Psoas muscle (tissue), 8 donors: ENCODE measurements at regions of chr10 and their contacts with region 1.

Region 1: DNA sequence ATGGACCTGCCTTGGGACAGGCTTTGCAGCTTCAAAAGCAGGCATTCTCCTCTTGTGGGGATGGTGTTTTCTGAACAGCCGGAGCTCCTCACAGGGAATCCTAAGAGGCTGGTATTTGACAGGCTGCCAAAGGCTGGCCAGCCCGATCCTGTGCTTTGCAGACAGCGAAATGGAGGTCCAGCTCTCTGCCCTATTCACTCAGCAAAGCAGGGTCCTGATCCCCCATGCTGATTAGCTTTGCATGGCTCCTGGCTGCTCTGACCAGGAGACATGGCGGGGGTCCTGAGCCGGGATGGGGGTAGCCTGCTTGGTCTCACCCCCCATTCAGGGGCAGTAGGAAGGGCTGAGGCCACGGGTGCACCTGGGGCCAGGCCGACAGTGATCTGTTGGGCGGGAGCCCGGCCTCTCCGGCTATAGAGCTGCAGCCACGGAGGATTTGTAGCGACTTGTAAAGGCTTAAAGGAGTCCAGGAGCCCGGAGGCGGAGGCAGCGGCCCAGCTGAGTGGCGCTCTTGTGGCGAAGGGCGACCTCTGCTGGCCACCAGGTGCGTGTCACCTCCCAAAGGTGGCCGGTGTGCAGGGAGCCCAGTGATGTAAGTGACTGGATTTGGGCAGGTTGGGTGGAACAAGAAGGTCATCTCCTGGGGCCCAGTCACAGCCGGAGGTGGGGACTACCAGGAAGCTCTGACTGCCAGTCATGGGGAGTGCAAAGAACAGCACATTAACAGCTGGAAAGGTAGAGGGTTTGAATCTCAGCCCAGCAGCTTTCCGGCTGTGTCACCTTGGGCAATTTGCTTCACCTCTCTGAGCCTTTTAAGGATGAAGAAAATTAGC is 126.5 kb downstream of the ZMIZ1 start:
- DNase-seq: peak; percentile 87 to 92
- ATAC-seq: peak; percentile 82 to 92 (median 88)
- H3K4me3 ChIP-seq: peak overlapping the region; percentile 22
- H3K27ac ChIP-seq: peak overlapping the region; percentile 53
- H3K4me1 ChIP-seq: peaks cover 28% of the 10 kb centered on the region
- H3K27me3 ChIP-seq: no peaks in the 10 kb centered on the region
- CTCF ChIP-seq: peak; percentile 98

Region 2: DNA sequence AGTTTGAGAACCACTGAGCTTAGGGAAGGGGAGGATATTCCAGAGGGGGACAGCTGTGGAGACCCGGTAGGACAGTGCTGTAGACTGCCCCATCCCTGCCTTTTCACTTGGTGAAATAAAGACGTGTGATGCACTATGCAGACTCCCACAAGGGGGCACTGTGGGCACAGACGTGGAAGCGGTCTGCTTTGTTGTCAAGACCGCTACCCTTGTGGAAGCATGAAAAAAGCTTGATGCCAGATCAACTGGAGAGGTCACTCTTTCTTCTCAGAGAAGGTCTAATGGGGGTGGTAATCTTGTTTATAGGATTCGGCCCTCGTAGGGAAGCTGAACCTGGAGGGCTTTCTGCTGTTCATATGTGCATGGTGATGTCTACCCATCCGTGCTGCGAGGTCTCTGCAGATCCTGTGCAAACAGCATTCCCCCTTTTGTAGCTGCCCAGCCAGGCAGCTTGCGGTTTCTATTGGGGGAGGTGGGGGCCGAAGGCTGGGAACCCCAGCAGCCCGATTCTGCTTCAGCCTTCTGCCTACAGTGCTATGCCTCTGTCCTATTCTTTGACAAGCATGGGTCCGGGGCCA is 1147.9 kb before region 1 on chr10:
- intact Hi-C with region 1: loop called (anchors 2 to 5 kb)
- DNase-seq: peak; percentile 87 to 92
- ATAC-seq: peak; percentile 75 to 89 (median 84)
- H3K4me3 ChIP-seq: no peak overlapping the region
- H3K27ac ChIP-seq: no peak overlapping the region
- H3K4me1 ChIP-seq: peaks cover 11% of the 10 kb centered on the region
- H3K27me3 ChIP-seq: no peaks in the 10 kb centered on the region
- CTCF ChIP-seq: peak; percentile 86

Region 3: DNA sequence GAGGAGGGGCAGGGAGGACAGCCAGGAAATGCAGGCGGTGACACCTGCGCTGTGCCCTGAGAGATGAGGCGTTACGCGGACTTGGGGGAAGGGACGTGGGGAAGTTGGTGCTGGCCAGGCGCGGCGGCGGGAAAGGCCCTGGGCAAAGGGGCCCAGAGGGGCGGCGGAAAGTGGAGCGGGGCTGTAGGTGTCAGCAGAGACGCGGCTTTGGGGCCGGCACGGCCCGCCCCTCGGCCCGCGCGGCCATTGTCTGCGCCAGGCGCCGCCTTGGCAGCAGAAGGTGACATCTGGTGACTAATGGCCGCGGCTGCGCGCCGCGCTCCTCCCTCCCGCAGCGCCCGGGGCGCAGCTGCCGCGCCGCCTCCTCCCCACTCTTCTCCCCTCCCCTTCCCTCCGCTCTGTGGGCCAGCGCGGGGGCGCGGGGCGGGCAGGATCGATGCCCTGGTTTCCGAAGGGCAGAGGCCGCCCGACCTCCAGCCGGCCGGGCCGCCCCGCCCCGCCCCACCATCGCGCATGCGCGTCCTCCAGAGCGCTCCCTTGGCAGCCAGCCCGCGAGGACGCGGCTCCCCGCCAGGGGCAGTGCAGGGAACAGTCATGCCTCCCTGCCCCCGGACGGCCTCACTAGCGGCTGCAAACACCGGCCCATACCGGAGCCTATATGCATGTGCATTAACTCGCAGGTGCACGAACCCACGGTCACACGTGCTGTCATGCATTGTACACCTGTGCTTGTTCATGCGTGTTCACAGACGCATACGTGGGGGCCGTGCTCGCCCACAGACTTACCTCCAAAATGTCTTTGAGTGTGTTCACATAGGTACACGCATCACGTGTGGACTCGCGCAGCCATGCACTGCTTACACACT is 892.1 kb before region 1 on chr10:
- intact Hi-C with region 1: loop called in 1 of 2 experiments (anchors 10 kb)
- DNase-seq: peak; percentile 96 to 97
- ATAC-seq: peak; percentile 94 to 96 (median 96)
- H3K4me3 ChIP-seq: peak overlapping the region; percentile 79
- H3K27ac ChIP-seq: peak overlapping the region; percentile 89
- H3K4me1 ChIP-seq: peaks cover 14% of the 10 kb centered on the region
- H3K27me3 ChIP-seq: no peaks in the 10 kb centered on the region
- CTCF ChIP-seq: peak; percentile 60

Region 4: DNA sequence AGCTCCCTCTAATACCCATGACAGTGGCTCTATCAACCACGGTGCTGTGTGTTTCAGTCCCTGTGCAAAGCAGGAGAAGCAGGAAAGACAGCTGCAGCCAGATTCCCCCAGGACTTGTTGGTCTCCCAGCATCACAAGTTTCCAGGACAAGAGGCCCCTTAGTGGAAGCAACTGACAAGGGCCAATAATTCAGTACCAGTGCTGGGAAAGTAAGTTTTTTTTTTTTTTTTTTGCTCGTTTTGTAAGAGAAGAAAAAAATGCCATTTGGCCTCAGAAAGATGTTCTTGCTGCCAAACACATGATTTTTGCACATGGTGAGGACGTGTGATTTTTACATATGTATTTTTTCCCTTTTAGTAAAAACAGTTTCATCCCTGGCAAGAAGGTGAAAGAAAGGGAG is 410.8 kb before region 1 on chr10:
- intact Hi-C with region 1: loop called in 1 of 2 experiments (anchors 10 kb)
- DNase-seq: no peak
- ATAC-seq: peak in 1 of 4 donors; percentile 28
- H3K4me3 ChIP-seq: no peak overlapping the region
- H3K27ac ChIP-seq: no peak overlapping the region
- H3K4me1 ChIP-seq: no peaks in the 10 kb centered on the region
- H3K27me3 ChIP-seq: no peaks in the 10 kb centered on the region
- CTCF ChIP-seq: no peak

Region 5: GRCh38 chr10:78931321-78932053 is 263.8 kb before region 1 on chr10:
- intact Hi-C with region 1: loop called in 1 of 2 experiments (anchors 10 kb)
- DNase-seq: peak; percentile 79 to 84
- ATAC-seq: peak in 1 of 4 donors; percentile 57
- H3K4me3 ChIP-seq: no peak overlapping the region
- H3K27ac ChIP-seq: peak overlapping the region; percentile 23
- H3K4me1 ChIP-seq: no peaks in the 10 kb centered on the region
- H3K27me3 ChIP-seq: no peaks in the 10 kb centered on the region
- CTCF ChIP-seq: no peak

Region 6: GRCh38 chr10:79068562-79069324 is 126.6 kb before region 1 on chr10 and contains the start of gene ZMIZ1:
- intact Hi-C with region 1: loop called (anchors 5 kb)
- DNase-seq: peak; percentile 89 to 93
- ATAC-seq: peak; percentile 49 to 61 (median 52)
- H3K4me3 ChIP-seq: peak within 1 kb of the TSS; percentile 94
- H3K27ac ChIP-seq: peak within 1 kb of the TSS; percentile 97
- H3K4me1 ChIP-seq: peaks cover 29% of the 10 kb centered on the region
- H3K27me3 ChIP-seq: no peaks in the 10 kb centered on the region
- CTCF ChIP-seq: peak; percentile 45
- total RNA-seq, gene ZMIZ1: 30.0 to 37.6 (median 35.4) TPM

Region 7: DNA sequence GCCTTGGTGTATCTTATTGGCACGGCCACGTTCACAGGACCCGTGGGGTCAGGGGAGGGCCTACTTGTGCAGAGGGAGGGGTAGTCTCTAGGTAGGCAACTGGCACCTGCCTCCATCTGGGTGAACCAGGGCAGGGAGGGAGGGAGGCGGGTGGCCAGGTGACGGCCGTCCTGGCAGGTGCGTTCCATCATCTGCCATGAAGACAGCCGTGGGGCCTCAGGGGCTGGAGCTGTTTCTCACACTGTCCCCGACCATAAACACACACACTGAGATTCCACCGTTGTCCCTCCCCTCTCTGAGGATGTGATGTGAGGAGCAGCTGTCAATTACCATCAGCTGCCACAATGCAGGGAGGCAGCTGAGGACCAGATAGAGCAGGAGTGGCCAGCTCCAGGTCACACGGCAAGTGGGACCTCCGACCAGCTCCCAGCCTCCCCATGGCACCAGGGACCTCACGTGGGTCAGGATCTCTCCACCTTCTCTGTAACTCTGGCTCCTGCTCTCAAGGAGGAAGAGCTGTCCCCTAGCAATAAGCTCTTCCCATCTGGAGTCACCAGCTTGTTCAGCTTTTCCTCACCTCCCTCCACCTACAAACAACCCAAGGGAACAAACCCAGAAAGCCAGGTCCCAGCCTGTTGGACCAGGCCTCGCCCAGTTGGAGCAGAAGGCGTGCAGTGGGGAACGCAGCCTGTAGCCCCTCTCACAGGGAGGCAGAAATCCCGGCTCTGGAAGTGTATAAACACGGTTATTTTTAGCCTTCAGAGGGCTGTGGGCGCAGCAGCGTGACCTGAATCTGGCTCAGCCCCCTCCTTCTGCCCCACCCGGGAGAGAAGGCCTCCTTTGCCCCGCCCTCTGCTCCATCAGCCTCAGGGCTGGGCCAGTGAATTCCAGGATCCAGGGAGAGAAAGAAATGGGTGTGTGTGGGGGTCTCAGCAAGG is 93.5 kb before region 1 on chr10:
- intact Hi-C with region 1: no loop called
- DNase-seq: peak; percentile 68 to 81
- ATAC-seq: peak; percentile 50 to 75 (median 64)
- H3K4me3 ChIP-seq: peak overlapping the region; percentile 23
- H3K27ac ChIP-seq: peak overlapping the region; percentile 77
- H3K4me1 ChIP-seq: peaks cover 88% of the 10 kb centered on the region
- H3K27me3 ChIP-seq: no peaks in the 10 kb centered on the region
- CTCF ChIP-seq: no peak

Region 8: GRCh38 chr10:79487296-79488194 is 292.2 kb after region 1 on chr10:
- intact Hi-C with region 1: no loop called
- DNase-seq: peak; percentile 53 to 78
- ATAC-seq: peak; percentile 65 to 81 (median 80)
- H3K4me3 ChIP-seq: no peak overlapping the region
- H3K27ac ChIP-seq: peak overlapping the region; percentile 51
- H3K4me1 ChIP-seq: peaks cover 5% of the 10 kb centered on the region
- H3K27me3 ChIP-seq: no peaks in the 10 kb centered on the region
- CTCF ChIP-seq: peak; percentile 70